Activated CD4-positive, alpha-beta T cell treated with anti-CD3 and anti-CD28 coated beads for 36 hours (primary cell): ENCODE measurements at regions of chr5 and their contacts with region 1.

Region 1: GRCh38 chr5:177241768-177242167 is 61.8 kb downstream of the RAB24 start:
- DNase-seq: no peak
- ATAC-seq: no peak
- H3K4me3 Mint-ChIP-seq: no peak overlapping the region
- H3K27ac Mint-ChIP-seq: no peak overlapping the region
- H3K4me1 Mint-ChIP-seq: no peaks in the 10 kb centered on the region
- H3K27me3 Mint-ChIP-seq: no peaks in the 10 kb centered on the region

Region 2: DNA sequence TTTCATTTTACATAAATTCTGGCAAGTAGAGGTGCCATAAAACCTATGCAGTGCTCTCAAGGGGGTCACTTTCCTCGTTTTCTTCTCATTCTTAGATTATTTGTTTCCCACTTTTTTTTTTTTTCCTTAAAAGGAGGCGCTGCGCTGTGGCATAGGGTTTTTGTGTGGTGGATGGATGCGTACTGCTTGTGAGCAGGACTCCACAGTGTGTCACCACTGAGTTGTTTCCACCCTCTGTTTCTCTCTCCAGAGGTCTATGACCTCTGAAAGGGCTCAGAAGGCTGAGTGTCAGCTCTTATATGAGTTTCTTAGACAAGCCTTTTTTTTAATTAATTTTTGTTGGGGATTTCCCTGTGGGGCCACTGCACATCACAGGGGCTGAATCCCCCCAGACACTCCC is 811.8 kb before region 1 on chr5:
- CTCF ChIA-PET with region 1: no interaction called
- POLR2A ChIA-PET with region 1: no interaction called
- intact Hi-C with region 1: no loop called
- DNase-seq: no peak
- ATAC-seq: no peak
- H3K4me3 Mint-ChIP-seq: no peak overlapping the region
- H3K27ac Mint-ChIP-seq: no peak overlapping the region
- H3K4me1 Mint-ChIP-seq: no peaks in the 10 kb centered on the region
- H3K27me3 Mint-ChIP-seq: no peaks in the 10 kb centered on the region

Region 3: GRCh38 chr5:177256296-177256695 is 14.5 kb after region 1 on chr5:
- CTCF ChIA-PET with region 1: interaction called, 3 read pairs
- POLR2A ChIA-PET with region 1: no interaction called
- intact Hi-C with region 1: loop called in 1 of 2 experiments (anchors 2 kb)
- DNase-seq: no peak
- ATAC-seq: no peak
- H3K4me3 Mint-ChIP-seq: no peak overlapping the region
- H3K27ac Mint-ChIP-seq: no peak overlapping the region
- H3K4me1 Mint-ChIP-seq: peaks cover 2% of the 10 kb centered on the region
- H3K27me3 Mint-ChIP-seq: no peaks in the 10 kb centered on the region

Region 4: GRCh38 chr5:179228341-179229121 is 1986.8 kb after region 1 on chr5:
- CTCF ChIA-PET with region 1: no interaction called
- POLR2A ChIA-PET with region 1: no interaction called
- intact Hi-C with region 1: no loop called
- DNase-seq: no peak
- ATAC-seq: no peak
- H3K4me3 Mint-ChIP-seq: no peak overlapping the region
- H3K27ac Mint-ChIP-seq: no peak overlapping the region
- H3K4me1 Mint-ChIP-seq: no peaks in the 10 kb centered on the region
- H3K27me3 Mint-ChIP-seq: no peaks in the 10 kb centered on the region